A673 (cell line): ENCODE measurements at regions of chr16 and their contacts with region 1.

Region 1: GRCh38 chr16:4253394-4254150 is 11.7 kb upstream of the SRL start:
- DNase-seq: peak; percentile 100
- H3K4me3 ChIP-seq: peak overlapping the region; percentile 71
- H3K27ac ChIP-seq: peak overlapping the region; percentile 91
- H3K4me1 ChIP-seq: no peaks in the 10 kb centered on the region
- H3K27me3 ChIP-seq: no peaks in the 10 kb centered on the region
- CTCF ChIP-seq: no peak

Region 2: DNA sequence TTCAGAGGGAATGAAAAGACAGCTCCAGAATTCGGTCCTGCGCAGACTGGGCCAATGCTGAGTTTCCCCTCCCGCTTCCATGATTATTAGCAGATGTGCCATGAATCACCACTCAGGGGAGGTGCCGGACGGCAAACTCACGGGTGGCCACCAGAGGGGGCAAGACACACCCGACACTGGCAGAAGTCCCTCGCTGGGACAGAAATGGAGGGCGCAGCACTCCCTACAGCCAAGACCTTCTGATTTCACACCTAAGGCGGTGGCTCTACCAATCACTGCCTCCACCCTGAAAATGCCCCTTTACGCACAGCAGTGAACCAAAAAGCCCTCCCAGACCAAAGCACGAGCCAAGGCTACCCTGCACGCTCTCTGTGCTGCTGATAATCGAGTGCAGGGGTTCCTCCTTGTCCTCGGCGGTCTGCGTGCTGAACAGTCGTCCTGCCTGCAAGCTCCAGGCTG is 563.1 kb before region 1 on chr16:
- CTCF ChIA-PET with region 1: interaction called, 7 read pairs
- POLR2A ChIA-PET with region 1: no interaction called
- intact Hi-C with region 1: loop called (anchors 10 kb)
- DNase-seq: peak; percentile 95
- H3K4me3 ChIP-seq: no peak overlapping the region
- H3K27ac ChIP-seq: peak overlapping the region; percentile 21
- H3K4me1 ChIP-seq: peaks cover 12% of the 10 kb centered on the region
- H3K27me3 ChIP-seq: no peaks in the 10 kb centered on the region
- CTCF ChIP-seq: peak; percentile 98

Region 3: DNA sequence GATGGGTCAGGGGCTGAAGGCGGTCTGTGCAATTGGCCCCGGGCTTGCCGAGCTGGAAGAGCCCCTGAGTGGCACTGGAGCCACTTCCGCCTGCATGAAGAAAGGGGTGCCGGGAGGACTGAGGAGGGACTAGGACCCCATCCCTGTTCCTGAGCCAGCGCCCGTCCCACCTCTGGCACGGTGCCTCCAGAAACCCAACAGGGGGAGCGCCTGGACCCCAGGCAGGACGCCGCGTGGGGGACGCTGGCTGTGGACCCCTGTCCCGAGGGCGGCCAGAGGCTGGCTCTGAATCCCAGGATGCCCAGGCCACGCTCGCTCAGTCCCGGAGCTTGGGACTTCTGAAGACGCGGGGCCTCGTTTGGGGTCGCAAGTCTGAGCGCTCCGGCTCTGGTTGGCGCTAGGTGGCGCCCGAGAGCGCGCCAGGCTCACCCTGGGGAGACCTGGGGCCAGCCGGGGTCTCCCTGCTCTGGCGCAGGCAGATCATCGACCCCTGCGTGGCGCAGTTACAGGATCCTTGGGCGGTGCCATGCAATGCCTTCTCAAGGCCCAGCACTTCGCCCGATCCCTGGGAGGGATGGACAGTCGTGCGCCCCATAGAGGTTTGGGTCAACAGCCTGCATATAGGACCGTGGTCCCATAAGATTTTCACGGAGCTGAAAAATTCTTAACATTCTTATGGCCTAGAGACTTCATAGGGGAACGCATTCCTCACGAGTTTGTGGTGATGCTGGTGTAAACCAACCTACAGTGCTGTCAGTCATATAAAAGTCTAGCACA is 314.5 kb before region 1 on chr16:
- CTCF ChIA-PET with region 1: interaction called, 6 read pairs
- POLR2A ChIA-PET with region 1: no interaction called
- intact Hi-C with region 1: loop called (anchors 5 kb)
- DNase-seq: peak; percentile 81
- H3K4me3 ChIP-seq: peak overlapping the region; percentile 47
- H3K27ac ChIP-seq: no peak overlapping the region
- H3K4me1 ChIP-seq: no peaks in the 10 kb centered on the region
- H3K27me3 ChIP-seq: no peaks in the 10 kb centered on the region
- CTCF ChIP-seq: peak; percentile 97

Region 4: GRCh38 chr16:3983081-3983520 is 270.5 kb before region 1 on chr16:
- CTCF ChIA-PET with region 1: interaction called, 30 read pairs
- POLR2A ChIA-PET with region 1: no interaction called
- intact Hi-C with region 1: loop called (anchors 2 kb)
- DNase-seq: peak; percentile 70
- H3K4me3 ChIP-seq: no peak overlapping the region
- H3K27ac ChIP-seq: no peak overlapping the region
- H3K4me1 ChIP-seq: peaks cover 16% of the 10 kb centered on the region
- H3K27me3 ChIP-seq: no peaks in the 10 kb centered on the region
- CTCF ChIP-seq: peak; percentile 90

Region 5: DNA sequence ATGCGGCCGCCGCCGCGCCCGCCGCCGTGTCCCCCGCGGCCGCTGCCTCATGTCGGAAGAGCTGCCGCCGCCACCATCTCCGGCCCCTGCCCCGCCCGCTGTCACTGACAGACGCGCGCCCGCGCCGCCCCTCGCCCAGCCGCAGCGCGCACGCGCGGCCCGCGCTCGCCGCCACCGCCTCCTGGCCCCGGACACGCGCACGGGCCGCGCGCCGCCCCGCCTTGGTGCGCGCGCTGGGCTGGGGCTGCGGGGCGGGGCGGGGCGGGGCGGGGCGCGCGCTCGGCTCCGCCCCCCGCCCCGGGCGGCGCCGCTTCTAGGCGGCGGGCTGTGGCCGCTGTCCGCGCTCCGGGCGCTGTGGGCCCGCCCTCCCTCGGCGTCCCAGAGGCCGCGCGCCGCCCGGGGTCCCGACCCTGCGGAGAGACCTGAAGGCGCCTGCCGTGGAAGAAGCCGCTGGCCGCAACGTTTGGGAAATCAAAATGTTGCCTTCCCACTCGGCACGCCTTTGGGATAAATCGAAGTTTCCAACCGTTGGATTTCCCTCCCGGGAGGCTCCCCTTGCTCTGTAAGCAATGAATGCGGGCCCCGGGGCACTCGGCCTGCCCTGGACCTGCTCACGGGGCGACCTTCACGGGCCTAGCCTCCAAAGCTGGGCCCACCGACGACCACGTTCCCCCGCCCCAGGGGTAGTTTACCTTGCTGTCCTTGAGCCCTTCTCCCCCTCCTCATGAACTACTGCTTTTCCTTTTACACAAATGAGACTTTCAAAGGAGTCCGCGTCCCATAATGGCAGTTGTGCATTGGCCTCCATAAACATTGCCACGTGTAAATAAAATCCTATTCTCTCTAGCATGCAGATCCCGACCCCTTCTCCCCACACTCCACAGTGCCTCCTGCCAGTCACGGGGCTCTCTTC is 137.0 kb before region 1 on chr16 and contains the start of gene ADCY9:
- CTCF ChIA-PET with region 1: interaction called, 4 read pairs
- POLR2A ChIA-PET with region 1: no interaction called
- intact Hi-C with region 1: loop called (anchors 5 kb)
- DNase-seq: peak; percentile 90
- H3K4me3 ChIP-seq: peak within 1 kb of the TSS; percentile 69
- H3K27ac ChIP-seq: peak within 1 kb of the TSS; percentile 82
- H3K4me1 ChIP-seq: peaks cover 12% of the 10 kb centered on the region
- H3K27me3 ChIP-seq: no peaks in the 10 kb centered on the region
- CTCF ChIP-seq: 0 out of 2 replicates have a peak, but pooled peaks have one; percentile 15
- total RNA-seq, gene ADCY9: 7.0 and 8.8 TPM in 2 replicates

Region 6: DNA sequence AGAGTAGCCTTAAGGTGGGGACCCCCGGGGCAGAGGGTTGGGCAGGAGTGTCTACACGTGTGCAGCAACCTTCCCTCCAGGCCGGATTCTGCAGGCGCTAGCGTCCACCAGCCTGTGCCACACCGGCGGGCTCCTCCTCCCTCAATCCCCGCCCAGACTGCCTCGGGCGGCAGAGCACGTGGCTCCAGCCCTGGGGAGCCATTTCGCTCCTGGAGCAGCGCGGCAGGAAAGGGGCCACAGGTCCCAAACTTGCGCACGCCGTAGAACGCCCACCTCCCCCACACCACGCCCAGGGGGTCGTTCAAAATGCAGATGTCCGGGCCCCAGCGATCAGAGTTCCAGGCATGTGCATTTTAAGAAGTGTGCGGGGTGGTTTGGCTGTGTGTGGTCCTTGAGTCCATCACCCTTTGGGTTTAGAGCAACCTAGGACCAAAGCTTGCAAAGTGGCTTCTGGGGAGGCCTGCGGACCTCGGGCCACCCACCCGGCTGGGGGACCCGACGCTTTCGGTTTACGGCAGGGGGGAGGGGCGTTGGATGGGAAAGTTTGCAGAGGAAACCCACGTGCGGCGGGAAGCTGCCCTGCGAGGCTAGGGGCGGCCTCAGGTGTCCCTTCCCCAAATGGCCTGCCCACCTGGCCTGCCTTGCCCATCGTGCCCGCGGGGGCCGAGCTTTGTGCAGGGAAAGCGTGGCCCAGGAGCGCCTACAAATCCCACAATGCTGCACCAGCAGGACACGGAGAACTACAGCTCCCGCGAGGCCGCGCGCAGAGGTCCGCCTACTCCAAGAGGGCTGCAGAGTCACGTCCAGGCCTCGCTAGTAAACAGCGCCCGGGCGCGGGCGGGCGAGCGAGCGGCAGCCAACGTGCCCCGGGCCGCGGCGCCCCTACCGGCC is 17.8 kb after region 1 on chr16:
- CTCF ChIA-PET with region 1: interaction called, 10 read pairs
- POLR2A ChIA-PET with region 1: no interaction called
- intact Hi-C with region 1: no loop called
- DNase-seq: peak; percentile 96
- H3K4me3 ChIP-seq: peak overlapping the region; percentile 87
- H3K27ac ChIP-seq: peak overlapping the region; percentile 91
- H3K4me1 ChIP-seq: peaks cover 20% of the 10 kb centered on the region
- H3K27me3 ChIP-seq: no peaks in the 10 kb centered on the region
- CTCF ChIP-seq: no peak

Region 7: DNA sequence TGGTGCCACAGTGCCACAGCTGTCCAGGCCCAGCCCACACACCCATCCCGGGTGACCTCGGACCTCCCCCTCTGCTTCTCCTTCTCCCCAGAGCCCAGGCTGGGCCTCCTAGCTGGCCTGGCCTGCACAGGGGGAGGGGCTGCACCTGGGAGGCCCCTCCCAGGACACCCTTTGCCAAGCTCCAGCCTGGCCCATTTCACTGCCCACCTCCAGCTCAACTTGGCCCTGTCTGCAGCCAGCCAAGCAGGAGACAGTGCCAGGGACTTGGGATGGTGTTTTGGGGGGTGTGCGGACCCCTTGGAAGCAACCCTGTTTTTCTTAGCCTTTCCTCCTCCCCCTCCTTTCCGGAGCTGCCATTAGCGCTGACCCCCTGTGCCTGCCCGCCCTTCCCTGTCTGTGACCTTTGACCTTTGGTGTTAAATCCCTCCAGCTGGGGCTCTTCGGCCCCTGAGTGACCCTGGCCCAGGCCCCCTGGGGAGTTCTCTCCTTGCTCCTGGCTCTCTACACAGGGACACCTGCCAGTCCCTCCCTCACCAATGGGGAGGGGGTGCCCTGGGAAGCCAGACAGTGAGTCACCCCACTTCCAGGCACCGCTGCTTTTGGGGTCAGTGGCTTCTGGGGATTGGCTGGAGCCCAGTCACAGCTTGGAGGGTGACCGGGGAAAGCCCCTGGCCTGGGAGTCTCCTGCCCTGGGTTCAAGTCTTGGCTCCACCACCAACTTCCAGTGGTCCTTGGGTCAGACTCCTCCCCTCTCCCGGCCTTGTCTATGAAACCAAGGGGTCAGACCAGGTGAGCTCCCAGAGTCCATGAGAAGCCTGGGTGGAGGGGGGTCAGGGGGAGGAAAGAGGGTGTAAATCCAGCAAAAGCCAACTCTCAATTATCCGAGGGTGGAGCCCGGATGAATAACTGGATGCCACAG is 64.2 kb after region 1 on chr16:
- CTCF ChIA-PET with region 1: no interaction called
- POLR2A ChIA-PET with region 1: no interaction called
- intact Hi-C with region 1: no loop called
- DNase-seq: no peak
- H3K4me3 ChIP-seq: no peak overlapping the region
- H3K27ac ChIP-seq: no peak overlapping the region
- H3K4me1 ChIP-seq: peaks cover 30% of the 10 kb centered on the region
- H3K27me3 ChIP-seq: no peaks in the 10 kb centered on the region
- CTCF ChIP-seq: no peak

Region 8: DNA sequence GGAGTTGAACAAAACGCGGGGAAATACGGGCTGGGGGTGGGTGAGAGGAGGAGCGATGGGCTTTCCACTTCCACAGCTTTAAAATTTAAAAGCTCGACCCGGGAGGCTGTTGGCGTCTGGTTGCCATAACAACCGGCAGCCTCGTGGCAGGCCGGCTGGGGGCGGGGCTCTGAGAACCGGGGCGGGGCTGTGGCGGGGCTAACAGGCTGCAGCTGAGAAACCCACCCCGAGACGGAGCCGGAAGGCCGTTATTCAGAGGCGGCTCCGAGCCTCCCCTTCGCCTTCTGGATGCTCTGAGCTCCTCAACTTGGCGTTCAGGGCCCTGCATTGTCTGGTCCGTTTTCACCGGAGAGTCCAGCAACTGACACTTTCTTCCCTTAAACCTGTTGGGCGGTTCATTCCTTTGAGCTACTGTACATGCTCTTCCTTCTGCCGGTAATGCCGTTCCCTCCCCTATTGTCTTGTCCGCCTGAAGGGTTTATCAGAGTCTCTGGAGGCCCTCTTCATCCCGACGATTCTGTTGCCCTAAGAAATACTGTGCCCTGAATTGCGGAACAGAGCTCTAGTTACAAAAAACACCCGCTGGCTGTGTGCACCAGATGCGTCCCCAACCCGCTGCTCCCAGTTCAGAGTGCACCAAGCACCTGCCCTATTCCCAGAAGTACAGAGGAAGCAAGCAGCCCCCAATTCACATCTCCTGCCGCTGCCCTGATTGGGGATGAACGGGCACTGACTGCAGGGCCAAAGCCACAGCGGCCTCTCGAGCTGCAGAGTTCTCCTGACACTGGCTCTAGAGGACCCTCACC is 481.4 kb after region 1 on chr16:
- CTCF ChIA-PET with region 1: no interaction called
- POLR2A ChIA-PET with region 1: interaction called, 32 read pairs
- intact Hi-C with region 1: no loop called
- DNase-seq: peak; percentile 89
- H3K4me3 ChIP-seq: peak overlapping the region; percentile 96
- H3K27ac ChIP-seq: peak overlapping the region; percentile 86
- H3K4me1 ChIP-seq: no peaks in the 10 kb centered on the region
- H3K27me3 ChIP-seq: no peaks in the 10 kb centered on the region
- CTCF ChIP-seq: no peak